Calu3 (cell line): ENCODE measurements at regions of chr3 and their contacts with region 1.

Region 1: DNA sequence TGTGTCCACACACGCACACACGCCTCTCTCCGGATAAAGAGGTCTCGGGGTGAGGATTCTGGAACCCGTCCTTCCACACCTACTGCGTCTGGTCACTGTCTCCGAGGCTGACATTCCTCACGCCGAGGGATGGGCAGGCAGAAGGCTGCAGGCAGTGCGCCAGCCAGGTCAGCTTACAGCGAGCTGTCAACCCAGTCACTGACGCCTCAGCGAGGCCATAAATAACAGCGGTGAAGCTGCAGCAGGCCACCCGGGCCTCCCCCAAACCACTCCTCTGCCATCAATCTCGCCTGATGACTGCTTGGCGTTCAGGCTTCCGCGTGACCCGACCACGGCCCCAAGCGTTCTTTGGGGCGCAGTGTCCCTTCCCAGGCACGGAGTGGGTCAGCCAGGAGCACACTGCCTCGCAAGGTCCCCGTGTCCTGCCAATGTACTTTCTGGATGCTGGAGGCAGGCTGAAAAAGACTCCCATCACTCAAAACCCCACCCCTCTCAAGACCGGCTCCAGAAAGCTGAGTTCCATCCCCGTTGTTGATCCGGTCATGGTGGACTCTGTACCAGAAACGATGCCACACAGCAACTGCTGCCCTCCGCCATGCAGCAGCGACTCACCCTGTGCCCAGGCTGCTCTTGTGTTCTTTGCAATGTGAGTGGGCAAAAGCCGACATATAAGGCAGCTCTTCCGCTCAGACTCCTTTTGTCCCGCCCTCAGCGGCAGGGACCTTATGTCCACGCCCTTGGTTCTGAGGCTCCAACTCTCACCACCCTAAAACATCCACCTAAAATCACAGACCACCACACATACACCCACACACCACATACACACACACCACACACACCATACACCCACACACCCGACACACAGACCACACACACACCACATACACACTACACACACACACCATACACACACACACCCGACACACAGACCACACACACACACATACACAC is 27.1 kb downstream of the CPN2 start:
- DNase-seq: peak; percentile 79
- H3K4me3 Mint-ChIP-seq: no peak overlapping the region
- H3K27ac Mint-ChIP-seq: no peak overlapping the region
- H3K4me1 Mint-ChIP-seq: peaks cover 35% of the 10 kb centered on the region
- H3K27me3 Mint-ChIP-seq: no peaks in the 10 kb centered on the region
- CTCF ChIP-seq: no peak

Region 2: GRCh38 chr3:193665370-193665989 is 658.6 kb before region 1 on chr3:
- CTCF ChIA-PET with region 1: interaction called, 3 read pairs
- intact Hi-C with region 1: loop called (anchors 2 kb)
- DNase-seq: no peak
- H3K4me3 Mint-ChIP-seq: no peak overlapping the region
- H3K27ac Mint-ChIP-seq: no peak overlapping the region
- H3K4me1 Mint-ChIP-seq: no peaks in the 10 kb centered on the region
- H3K27me3 Mint-ChIP-seq: no peaks in the 10 kb centered on the region
- CTCF ChIP-seq: peak; percentile 74

Region 3: DNA sequence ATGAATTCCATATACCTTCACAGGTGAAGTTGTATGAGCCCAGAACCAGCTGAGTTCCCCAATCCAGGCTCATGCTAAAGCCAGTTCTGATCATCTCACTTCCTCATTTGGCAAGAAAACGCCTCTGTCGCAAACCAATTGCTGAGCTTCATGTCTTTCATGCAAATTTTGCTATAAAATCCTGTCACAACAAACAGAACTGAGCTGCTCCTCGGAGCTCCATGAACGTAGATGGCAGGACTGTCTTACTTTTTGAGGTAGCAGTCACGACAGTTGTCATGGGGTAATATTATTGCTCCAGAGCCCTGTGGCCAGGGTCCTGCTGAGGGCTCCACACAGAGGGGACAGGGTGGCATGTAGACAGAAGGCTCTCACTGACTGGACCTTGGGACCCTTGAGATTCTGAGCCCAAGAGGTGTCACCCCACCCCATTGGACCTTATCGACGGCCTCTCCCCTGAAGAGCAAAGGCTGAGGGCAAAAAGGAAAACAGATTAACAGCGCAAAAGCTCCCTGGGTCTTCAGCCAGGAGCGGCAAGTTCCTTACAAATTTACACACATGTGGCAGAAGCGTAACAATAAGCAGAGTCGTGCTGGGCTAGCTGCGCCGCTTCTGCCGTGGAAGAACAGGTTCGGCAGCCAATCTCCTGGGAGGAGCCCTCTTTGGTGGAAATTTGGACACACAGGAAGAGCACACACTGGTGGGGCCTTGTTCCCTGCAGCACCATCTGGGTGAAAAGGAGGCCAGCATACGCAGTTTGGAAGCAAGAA is 481.8 kb before region 1 on chr3:
- CTCF ChIA-PET with region 1: interaction called, 5 read pairs
- intact Hi-C with region 1: loop called (anchors 5 kb)
- DNase-seq: no peak
- H3K4me3 Mint-ChIP-seq: peak overlapping the region; percentile 59
- H3K27ac Mint-ChIP-seq: peak overlapping the region; percentile 96
- H3K4me1 Mint-ChIP-seq: peaks cover 94% of the 10 kb centered on the region
- H3K27me3 Mint-ChIP-seq: no peaks in the 10 kb centered on the region
- CTCF ChIP-seq: no peak

Region 4: DNA sequence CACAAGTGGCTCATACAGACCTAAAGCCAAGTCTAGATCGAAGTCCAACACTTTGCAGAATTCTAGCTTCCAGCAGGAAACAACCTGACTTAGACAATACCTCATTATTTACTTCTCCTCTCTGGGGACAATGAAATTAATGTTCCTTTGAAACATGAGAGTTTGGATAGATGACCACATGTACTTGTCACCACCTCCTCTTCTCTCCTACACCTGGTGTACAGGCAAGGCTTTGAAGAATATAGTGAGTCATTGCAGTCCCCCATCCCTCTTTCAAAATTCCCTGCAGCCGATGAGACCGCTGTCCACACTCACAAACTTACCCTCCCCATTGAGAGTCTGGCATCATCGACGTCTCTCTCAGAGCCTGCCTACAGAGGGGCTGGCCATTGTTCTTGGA is 377.1 kb before region 1 on chr3:
- CTCF ChIA-PET with region 1: no interaction called
- intact Hi-C with region 1: no loop called
- DNase-seq: peak; percentile 72
- H3K4me3 Mint-ChIP-seq: no peak overlapping the region
- H3K27ac Mint-ChIP-seq: peak overlapping the region; percentile 52
- H3K4me1 Mint-ChIP-seq: peaks cover 42% of the 10 kb centered on the region
- H3K27me3 Mint-ChIP-seq: no peaks in the 10 kb centered on the region
- CTCF ChIP-seq: no peak

Region 5: GRCh38 chr3:194075802-194076460 is 248.1 kb before region 1 on chr3:
- CTCF ChIA-PET with region 1: no interaction called
- intact Hi-C with region 1: loop called (anchors 5 kb)
- DNase-seq: peak; percentile 67
- H3K4me3 Mint-ChIP-seq: no peak overlapping the region
- H3K27ac Mint-ChIP-seq: no peak overlapping the region
- H3K4me1 Mint-ChIP-seq: peaks cover 62% of the 10 kb centered on the region
- H3K27me3 Mint-ChIP-seq: no peaks in the 10 kb centered on the region
- CTCF ChIP-seq: peak; percentile 21

Region 6: DNA sequence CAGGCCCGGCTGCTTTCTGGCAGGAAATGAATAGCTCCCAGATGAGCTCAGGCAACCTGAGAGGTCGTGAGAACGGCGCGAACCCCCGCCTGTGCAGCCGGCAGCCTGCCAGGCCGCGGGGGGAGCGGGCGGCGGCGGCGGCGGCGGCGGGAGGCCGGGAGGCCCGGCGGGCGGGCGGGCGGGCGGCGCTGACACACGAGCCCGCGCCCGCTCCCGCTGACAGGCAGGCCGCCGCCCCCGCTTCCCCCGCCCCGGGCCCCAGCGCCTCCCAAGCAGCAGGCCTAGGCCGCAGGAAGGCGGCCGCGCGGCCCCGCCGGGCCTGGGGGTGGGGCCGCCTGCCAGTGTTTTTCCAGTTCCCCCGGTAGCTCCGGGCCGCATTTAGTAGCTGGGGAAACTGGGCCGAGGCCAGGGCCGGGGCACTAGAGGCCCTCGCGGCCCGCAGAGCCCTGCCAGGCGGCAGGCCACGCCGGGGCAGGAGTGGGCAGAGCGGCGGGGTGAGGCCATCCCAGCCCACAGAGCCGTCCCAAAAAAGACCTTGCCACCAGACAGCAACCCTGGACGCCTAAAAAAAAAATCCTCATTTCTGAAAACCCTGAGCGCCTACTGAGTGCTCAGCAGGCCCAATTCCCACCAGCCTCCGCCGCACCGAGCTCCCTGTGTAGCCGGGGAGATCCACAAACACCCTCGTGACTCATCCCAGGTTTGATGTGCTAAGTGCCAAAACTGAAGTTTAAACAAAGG is 182.5 kb before region 1 on chr3:
- CTCF ChIA-PET with region 1: interaction called, 10 read pairs
- intact Hi-C with region 1: loop called (anchors 2 kb)
- DNase-seq: peak; percentile 97
- H3K4me3 Mint-ChIP-seq: peak overlapping the region; percentile 92
- H3K27ac Mint-ChIP-seq: peak overlapping the region; percentile 83
- H3K4me1 Mint-ChIP-seq: peaks cover 35% of the 10 kb centered on the region
- H3K27me3 Mint-ChIP-seq: no peaks in the 10 kb centered on the region
- CTCF ChIP-seq: no peak

Region 7: GRCh38 chr3:194166682-194167479 is 157.2 kb before region 1 on chr3:
- CTCF ChIA-PET with region 1: no interaction called
- intact Hi-C with region 1: no loop called
- DNase-seq: no peak
- H3K4me3 Mint-ChIP-seq: no peak overlapping the region
- H3K27ac Mint-ChIP-seq: no peak overlapping the region
- H3K4me1 Mint-ChIP-seq: no peaks in the 10 kb centered on the region
- H3K27me3 Mint-ChIP-seq: no peaks in the 10 kb centered on the region
- CTCF ChIP-seq: no peak

Region 8: GRCh38 chr3:194604834-194605233 is 280.8 kb after region 1 on chr3:
- CTCF ChIA-PET with region 1: no interaction called
- intact Hi-C with region 1: no loop called
- DNase-seq: no peak
- H3K4me3 Mint-ChIP-seq: no peak overlapping the region
- H3K27ac Mint-ChIP-seq: no peak overlapping the region
- H3K4me1 Mint-ChIP-seq: no peaks in the 10 kb centered on the region
- H3K27me3 Mint-ChIP-seq: no peaks in the 10 kb centered on the region
- CTCF ChIP-seq: peak; percentile 57